Right ventricle myocardium inferior (tissue), 1 donor: ENCODE measurements at regions of chr12 and their contacts with region 1.

Region 1: DNA sequence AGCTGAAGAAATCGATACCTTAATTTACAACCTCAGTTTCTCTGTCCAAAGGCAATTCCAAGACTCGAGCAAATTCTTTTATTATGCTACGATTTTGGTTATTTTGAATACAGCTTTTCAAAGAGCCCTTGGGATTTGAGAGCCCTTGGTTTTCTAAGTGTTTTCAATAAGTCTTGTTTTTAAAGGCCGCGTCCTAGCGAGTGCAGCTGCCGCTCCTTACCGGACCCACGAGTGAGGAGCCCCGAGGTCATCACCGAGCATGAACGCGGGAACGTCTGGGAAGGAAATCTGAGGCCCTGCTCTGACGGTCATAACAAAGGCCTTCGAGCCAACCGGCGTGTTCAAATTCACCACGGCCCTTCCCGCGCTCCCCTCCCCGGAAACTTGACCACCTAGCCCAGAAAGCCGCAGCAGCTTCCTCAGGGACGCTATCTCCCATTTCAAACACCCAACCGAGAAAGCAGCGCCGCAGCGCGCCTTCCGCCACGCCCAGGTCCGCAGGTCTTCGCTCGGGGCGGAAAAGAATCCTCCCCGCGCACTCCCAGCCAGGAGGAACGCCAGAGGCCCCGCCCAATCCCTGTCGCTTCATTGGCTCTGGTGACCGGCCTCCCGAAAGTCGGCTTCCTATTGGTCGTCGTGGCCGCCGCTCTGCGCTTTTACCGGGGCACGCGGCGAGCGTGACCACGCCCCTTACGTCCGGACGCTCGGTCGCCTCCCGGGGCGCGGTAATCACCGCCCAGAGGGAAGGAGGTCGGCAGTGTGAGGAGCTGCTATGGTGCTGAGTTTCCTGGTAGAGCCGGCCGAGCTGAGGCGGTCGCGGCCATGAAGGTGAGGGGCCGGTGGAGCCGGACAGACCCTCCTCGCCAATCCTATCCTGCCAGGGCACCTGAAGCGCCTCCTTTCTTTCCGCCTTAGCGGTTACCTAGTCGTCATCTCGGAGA is at the start of gene RNF34:
- DNase-seq: peak; percentile 100
- ATAC-seq: peak; percentile 98
- total RNA-seq, gene RNF34: 19.5 TPM

Region 2: GRCh38 chr12:121033625-121034349 is 365.9 kb before region 1 on chr12:
- intact Hi-C with region 1: no loop called
- DNase-seq: no peak
- ATAC-seq: no peak

Region 3: DNA sequence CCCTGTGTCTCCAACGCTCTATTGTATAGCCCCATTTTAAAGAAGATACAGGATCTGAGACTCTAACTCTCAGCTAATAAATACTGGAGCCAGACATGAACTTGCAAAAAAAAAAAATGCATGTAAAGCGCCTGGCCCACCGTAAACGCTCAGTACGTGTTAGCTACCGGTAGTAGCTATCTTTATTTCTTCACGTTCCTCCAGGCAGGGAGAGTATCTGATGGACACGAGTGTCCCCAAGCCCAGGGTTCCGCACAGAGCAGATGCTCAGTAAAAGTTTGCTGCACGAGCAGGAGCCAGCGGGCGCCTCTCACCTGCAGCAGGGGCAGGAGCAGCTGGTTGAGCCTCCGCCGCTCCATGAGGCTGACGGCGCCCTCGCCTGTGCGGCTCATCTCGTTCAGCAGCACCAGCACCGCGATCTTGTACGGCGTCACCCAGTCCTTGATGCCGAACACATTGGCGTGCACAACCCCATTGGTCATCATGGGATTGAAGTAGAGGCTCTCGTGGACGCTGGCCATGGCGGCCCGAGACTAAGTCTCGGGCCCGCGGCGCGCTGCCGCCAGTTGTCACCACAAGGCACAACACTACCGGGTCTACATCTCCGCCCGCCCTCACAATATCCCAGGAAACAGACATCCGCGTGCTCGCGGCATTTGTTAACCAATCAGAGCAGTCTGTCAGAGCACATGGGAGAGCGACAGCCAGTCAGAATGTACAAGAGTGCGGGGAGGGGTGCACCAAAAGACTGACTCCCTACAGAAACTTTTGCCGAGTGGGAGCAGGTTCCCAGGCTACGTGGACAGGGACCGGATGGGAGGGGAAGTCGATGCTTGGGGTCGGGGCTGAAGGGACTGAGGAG is 47.6 kb before region 1 on chr12 and contains the start of gene ANAPC5:
- intact Hi-C with region 1: loop called (anchors 2 kb)
- DNase-seq: peak; percentile 96
- ATAC-seq: peak; percentile 100
- total RNA-seq, gene ANAPC5: 61.8 TPM

Region 4: GRCh38 chr12:121494093-121494787 is 94.6 kb after region 1 on chr12:
- intact Hi-C with region 1: no loop called
- DNase-seq: no peak
- ATAC-seq: no peak

Region 5: GRCh38 chr12:121522971-121523370 is 123.3 kb after region 1 on chr12:
- intact Hi-C with region 1: no loop called
- DNase-seq: no peak
- ATAC-seq: no peak